Left cardiac atrium (tissue), 4 donors: ENCODE measurements at regions of chr15 and their contacts with region 1.

Region 1: DNA sequence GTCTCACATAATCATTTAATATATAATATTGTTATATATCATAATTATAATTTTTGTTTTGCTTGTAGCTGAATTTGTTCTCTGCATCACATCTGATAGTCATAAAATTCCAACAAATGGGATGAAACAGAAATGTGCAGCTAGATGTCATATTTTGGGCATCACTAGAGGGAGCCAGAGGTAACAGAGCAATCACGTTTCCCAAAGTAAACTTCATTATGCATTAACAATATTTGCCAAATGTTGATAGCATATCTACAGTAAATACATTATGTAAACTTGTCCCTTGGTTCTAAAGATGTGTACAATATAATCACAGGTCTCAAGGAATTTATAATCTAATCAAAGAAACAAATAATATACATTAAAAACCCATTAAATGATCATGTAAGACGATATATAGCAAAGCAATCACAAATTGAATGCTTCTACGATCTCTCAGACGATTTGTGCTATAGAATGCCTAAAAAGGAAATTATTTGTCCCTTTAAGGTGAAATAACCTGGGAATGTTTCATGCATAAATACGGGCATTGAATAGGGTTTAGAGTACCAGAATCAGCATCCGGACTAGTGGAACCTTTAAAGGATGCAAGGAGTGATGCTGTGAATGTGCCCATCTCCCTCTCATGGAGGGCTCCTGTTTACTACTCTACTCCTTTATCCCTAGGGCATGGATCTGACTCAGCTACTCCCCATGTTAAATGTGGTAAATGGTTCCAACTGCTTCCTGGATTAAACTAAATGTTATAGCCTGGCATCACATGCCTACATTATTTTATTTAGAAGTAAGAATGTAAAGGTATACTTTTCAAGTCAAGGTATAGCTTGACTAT is 234.1 kb upstream of the MCTP2 start:
- DNase-seq: no peak
- ATAC-seq: no peak

Region 2: GRCh38 chr15:93730724-93731123 is 266.6 kb before region 1 on chr15:
- intact Hi-C with region 1: no loop called
- DNase-seq: no peak
- ATAC-seq: no peak

Region 3: GRCh38 chr15:94119923-94120775 is 122.8 kb after region 1 on chr15:
- intact Hi-C with region 1: loop called in 1 of 2 experiments (anchors 10 kb)
- DNase-seq: peak; percentile 40
- ATAC-seq: peak; percentile 95

Region 4: DNA sequence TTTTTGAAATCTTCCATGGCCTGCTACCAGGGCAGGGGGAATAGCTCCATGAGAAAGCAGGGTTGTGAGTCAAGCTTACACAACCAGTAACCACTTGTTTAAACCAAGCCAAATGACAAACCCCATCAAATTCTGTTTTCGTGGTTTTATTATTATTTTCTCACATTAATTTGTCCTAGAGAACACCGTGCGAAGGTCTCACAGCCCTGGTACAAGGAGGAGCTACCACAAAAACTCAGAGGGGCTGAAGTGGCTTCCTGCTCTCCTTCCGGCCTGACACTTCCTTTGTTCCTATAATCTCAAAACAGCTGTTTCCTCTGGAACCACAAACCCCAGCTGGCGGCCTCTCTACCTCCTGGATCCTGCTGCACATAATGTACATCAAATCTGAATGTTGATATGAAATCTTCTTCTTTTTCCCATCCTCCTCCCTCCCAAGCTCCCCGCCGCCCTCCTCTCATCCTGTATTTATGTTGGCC is 609.9 kb after region 1 on chr15:
- intact Hi-C with region 1: no loop called
- DNase-seq: peak; percentile 55
- ATAC-seq: peak; percentile 23 to 78